Activated naive CD4-positive, alpha-beta T cell treated with anti-CD3 and anti-CD28 coated beads for 36 hours (primary cell): ENCODE measurements at regions of chr9 and their contacts with region 1.

Region 1: GRCh38 chr9:136545966-136546698 is at the start of gene NOTCH1:
- DNase-seq: peak; percentile 88
- H3K4me3 Mint-ChIP-seq: peak within 1 kb of the TSS; percentile 94
- H3K27ac Mint-ChIP-seq: peak within 1 kb of the TSS; percentile 95
- H3K4me1 Mint-ChIP-seq: peaks cover 44% of the 10 kb centered on the region
- H3K27me3 Mint-ChIP-seq: no peaks in the 10 kb centered on the region
- total RNA-seq, gene NOTCH1: 71.4 to 80.2 TPM

Region 2: DNA sequence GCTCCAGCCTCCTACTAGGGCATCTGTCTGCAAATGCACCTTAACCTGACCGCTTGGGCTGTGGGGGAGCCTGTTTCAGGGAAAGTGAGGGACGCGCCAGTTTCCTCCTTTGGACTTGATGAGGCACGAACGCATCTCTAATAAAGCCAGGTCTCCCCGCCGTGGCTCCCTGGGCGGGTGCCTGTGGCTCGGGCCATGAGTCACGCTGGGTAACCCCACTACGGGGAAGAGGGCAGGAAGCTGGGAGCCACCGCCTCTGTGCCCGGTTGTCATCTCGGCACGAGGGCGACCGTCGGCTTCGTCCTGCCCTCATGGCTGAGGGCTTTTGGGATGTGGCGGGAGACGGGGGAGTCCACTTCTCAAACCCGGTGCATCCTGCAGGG is 12.4 kb before region 1 on chr9:
- CTCF ChIA-PET with region 1: interaction called, 3 read pairs
- intact Hi-C with region 1: loop called (anchors 1 kb)
- DNase-seq: peak; percentile 94
- H3K4me3 Mint-ChIP-seq: peak overlapping the region; percentile 57
- H3K27ac Mint-ChIP-seq: peak overlapping the region; percentile 91
- H3K4me1 Mint-ChIP-seq: peaks cover 73% of the 10 kb centered on the region
- H3K27me3 Mint-ChIP-seq: no peaks in the 10 kb centered on the region

Region 3: DNA sequence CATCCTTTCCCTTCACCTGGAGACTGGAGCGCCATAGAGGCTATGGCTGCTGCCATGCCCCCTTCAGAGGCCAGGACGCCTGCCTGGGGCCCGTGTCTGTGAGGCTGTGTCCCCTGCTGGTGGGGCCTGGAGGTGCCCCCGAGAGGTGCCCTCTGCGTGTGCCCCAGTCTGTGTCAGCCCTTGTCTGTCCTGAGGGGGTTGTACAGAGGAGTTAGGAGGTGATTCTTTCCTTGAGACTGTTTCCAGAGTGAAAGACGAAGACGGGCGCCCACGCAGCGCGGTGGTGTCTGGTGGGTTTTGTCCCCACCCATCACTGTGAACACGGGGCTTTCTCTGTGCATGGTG is 364.7 kb after region 1 on chr9:
- CTCF ChIA-PET with region 1: no interaction called
- intact Hi-C with region 1: no loop called
- DNase-seq: no peak
- H3K4me3 Mint-ChIP-seq: no peak overlapping the region
- H3K27ac Mint-ChIP-seq: no peak overlapping the region
- H3K4me1 Mint-ChIP-seq: peaks cover 9% of the 10 kb centered on the region
- H3K27me3 Mint-ChIP-seq: no peaks in the 10 kb centered on the region